PC-9 (cell line): ENCODE measurements at regions of chr22 and their contacts with region 1.

Region 1: GRCh38 chr22:32796865-32797573 is 4.5 kb upstream of the TIMP3 start:
- DNase-seq: peak in 1 of 2 experiments; percentile 61
- H3K4me3 ChIP-seq: no peak overlapping the region
- H3K27ac ChIP-seq: no peak overlapping the region
- H3K4me1 ChIP-seq: peaks cover 17% of the 10 kb centered on the region
- H3K27me3 ChIP-seq: no peaks in the 10 kb centered on the region
- CTCF ChIP-seq: peak; percentile 97

Region 2: GRCh38 chr22:32660292-32660691 is 136.7 kb before region 1 on chr22:
- CTCF ChIA-PET with region 1: interaction called, 25 read pairs
- POLR2A ChIA-PET with region 1: no interaction called
- intact Hi-C with region 1: loop called (anchors 1 kb)
- DNase-seq: peak in 1 of 2 experiments; percentile 55
- H3K4me3 ChIP-seq: no peak overlapping the region
- H3K27ac ChIP-seq: no peak overlapping the region
- H3K4me1 ChIP-seq: peaks cover 1% of the 10 kb centered on the region; the same call in 1 of the 2 replicates
- H3K27me3 ChIP-seq: no peaks in the 10 kb centered on the region
- CTCF ChIP-seq: peak; percentile 75

Region 3: GRCh38 chr22:32695451-32695891 is 101.5 kb before region 1 on chr22:
- CTCF ChIA-PET with region 1: interaction called, 4 read pairs
- POLR2A ChIA-PET with region 1: interaction called, 12 read pairs
- intact Hi-C with region 1: loop called (anchors 5 kb)
- DNase-seq: peak; percentile 73 to 99
- H3K4me3 ChIP-seq: no peak overlapping the region; the same call in 1 of the 2 replicates
- H3K27ac ChIP-seq: peak overlapping the region; percentile 94
- H3K4me1 ChIP-seq: peaks cover 78% of the 10 kb centered on the region
- H3K27me3 ChIP-seq: no peaks in the 10 kb centered on the region
- CTCF ChIP-seq: no peak

Region 4: GRCh38 chr22:32781695-32782094 is 15.3 kb before region 1 on chr22:
- CTCF ChIA-PET with region 1: interaction called, 13 read pairs
- POLR2A ChIA-PET with region 1: interaction called, 5 read pairs
- intact Hi-C with region 1: no loop called
- DNase-seq: no peak
- H3K4me3 ChIP-seq: no peak overlapping the region
- H3K27ac ChIP-seq: no peak overlapping the region
- H3K4me1 ChIP-seq: peaks cover 47% of the 10 kb centered on the region
- H3K27me3 ChIP-seq: no peaks in the 10 kb centered on the region
- CTCF ChIP-seq: no peak

Region 5: DNA sequence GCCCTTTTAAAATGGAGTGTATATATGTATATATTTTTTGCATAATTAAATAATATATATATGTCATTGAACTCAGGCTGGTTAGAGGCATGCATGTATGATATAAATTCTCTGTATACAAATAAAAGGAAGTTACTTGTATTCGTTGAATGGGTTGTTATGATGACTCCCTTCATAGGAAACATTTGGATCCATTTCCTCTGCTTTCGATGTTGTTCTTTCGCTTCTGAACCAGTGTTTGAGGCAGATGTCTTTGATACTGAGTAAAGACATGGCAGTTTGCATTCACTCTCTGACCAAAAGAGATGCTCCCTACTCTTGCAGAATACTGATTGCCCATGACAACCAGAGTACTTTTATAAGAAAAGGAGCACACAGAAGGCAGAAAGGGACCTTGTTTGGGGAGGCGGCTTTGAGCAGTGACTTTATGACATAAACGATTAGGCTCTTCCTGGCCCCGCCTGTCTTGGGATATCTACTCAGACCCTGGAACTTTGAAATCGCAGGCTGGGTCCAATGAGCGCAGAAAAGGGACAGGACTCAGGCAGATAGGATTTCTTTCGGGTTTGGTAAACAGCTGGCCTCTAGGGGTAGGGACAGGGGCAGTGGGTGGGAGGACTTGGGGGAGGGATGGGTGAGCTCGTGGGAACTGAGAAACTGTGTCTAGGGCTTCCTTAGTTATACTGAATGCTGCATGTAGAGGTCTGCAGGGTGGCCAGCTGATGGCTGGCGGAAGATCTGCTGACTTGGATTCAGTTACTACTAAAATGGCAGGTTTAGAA is 27.7 kb after region 1 on chr22:
- CTCF ChIA-PET with region 1: no interaction called
- POLR2A ChIA-PET with region 1: interaction called, 10 read pairs
- intact Hi-C with region 1: no loop called
- DNase-seq: no peak
- H3K4me3 ChIP-seq: no peak overlapping the region
- H3K27ac ChIP-seq: no peak overlapping the region
- H3K4me1 ChIP-seq: no peaks in the 10 kb centered on the region
- H3K27me3 ChIP-seq: no peaks in the 10 kb centered on the region
- CTCF ChIP-seq: no peak